ENCODE measurements at regions of chr22 and their contacts with region 1.

Region 1: DNA sequence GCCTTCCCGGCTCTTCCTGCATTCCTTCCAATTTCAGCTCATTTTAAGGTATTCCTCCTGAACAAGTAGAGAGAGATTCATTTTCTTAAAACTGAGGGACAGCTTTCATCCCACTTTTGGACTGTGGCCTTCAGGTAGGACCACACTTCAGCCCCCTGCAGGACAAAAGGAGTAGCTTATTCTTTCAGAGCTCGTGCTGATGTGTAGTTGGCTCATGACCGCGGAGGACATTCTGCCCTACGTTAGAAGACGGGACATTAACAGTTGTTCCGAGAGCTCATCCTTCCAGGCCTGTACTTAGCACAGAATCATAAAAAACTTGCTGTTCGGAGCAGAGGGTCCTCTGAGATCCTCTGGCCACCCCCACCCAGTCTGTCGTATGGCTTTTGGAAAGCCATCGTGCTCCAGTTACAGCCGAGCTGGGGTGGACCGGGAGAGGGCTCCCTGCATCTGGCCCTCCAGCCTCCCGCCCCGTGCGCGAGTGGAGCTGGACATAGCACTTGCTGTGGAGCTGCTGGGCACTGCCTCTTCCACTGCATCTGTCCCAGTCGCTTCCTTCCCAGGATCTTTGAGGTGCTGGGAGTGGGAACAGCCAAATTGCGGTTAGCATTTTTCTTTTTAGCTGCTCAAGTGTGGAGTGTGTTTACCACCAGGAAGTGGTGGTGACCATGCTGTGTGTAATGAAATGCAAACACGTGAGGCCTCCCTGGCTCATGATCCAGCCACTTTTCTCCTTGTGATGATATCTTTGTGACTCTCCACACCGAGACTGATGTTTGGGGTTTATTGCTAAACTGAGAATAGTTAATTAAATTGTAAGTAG is 250.3 kb downstream of the TBC1D22A start:
- DNase-seq: no peak
- H3K4me3 ChIP-seq: no peak overlapping the region
- H3K27ac ChIP-seq: no peak overlapping the region
- H3K4me1 ChIP-seq: no peaks in the 10 kb centered on the region
- H3K27me3 ChIP-seq: no peaks in the 10 kb centered on the region
- CTCF ChIP-seq: no peak

Region 2: GRCh38 chr22:47083379-47083986 is 70.7 kb after region 1 on chr22:
- CTCF ChIA-PET with region 1: interaction called, 13 read pairs
- POLR2A ChIA-PET with region 1: no interaction called
- intact Hi-C with region 1: no loop called
- DNase-seq: no peak
- H3K4me3 ChIP-seq: no peak overlapping the region
- H3K27ac ChIP-seq: no peak overlapping the region
- H3K4me1 ChIP-seq: no peaks in the 10 kb centered on the region
- H3K27me3 ChIP-seq: no peaks in the 10 kb centered on the region
- CTCF ChIP-seq: no peak

Region 3: DNA sequence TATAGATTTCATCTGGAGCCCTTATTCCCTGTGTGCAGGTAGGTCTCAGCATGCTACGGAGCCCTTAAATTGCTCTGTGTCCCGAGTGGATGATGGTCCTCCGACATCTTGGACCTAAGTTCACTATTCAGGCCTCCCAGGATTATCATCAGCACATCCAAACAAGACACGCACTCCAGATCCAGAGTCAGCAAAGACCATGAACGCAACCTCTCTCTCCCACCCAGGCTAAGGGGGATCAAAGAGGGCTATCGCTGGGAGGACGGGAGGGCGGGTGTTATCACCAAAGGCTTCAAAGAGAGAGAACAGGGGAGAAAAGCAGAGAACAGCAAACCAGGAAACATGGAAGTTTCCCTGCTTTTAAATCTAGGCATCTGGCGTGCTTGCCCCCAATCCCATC is 409.0 kb after region 1 on chr22:
- CTCF ChIA-PET with region 1: interaction called, 11 read pairs
- POLR2A ChIA-PET with region 1: no interaction called
- intact Hi-C with region 1: no loop called
- DNase-seq: no peak
- H3K4me3 ChIP-seq: no peak overlapping the region
- H3K27ac ChIP-seq: no peak overlapping the region
- H3K4me1 ChIP-seq: no peaks in the 10 kb centered on the region
- H3K27me3 ChIP-seq: peaks cover 83% of the 10 kb centered on the region
- CTCF ChIP-seq: no peak

Measured in PC-9 (cell line).